Activated T-helper 1 cell treated with anti-CD3 and anti-CD28 coated beads, Interleukin-12 subunit alpha, Interleukin-12 subunit beta, Interleukin-2, Interleukin-4 antibody, amounts not matched to agents 30 ng/mL and 10 ng/mL and 1 ng/mL, durations not matched to agents 14 hours and 24 hours and 36 hours (primary cell): ENCODE measurements at regions of chr14 and their contacts with region 1.

Region 1: GRCh38 chr14:94129111-94129757 is at the start of gene IFI27L2:
- DNase-seq: peak; percentile 59
- H3K4me3 Mint-ChIP-seq: peak within 1 kb of the TSS; percentile 87
- H3K27ac Mint-ChIP-seq: peak within 1 kb of the TSS; percentile 86
- H3K4me1 Mint-ChIP-seq: peaks cover 26% of the 10 kb centered on the region
- H3K27me3 Mint-ChIP-seq: peaks cover 20% of the 10 kb centered on the region
- total RNA-seq, gene IFI27L2: 33.5 and 36.1 TPM in 2 replicates

Region 2: DNA sequence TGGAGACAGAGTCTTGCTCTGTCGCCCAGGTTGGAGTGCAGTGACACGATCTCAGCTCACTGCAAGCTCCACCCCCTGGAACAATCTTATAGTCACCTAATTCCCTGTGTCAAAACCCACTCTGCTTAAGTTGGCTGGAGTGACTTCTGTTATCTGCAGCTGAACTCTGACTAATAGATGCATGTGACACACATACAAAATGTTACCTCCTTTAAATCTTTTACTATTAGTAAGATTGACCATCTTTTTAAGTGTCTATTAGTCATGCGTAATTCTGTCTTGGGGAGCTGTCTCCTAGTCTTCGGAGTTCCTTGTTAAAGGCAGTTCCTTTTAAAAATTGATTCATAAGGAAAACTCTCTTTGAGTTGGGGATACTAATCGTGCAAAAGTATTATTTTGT is 40.7 kb before region 1 on chr14:
- intact Hi-C with region 1: no loop called
- DNase-seq: no peak
- H3K4me3 Mint-ChIP-seq: no peak overlapping the region
- H3K27ac Mint-ChIP-seq: no peak overlapping the region
- H3K4me1 Mint-ChIP-seq: no peaks in the 10 kb centered on the region
- H3K27me3 Mint-ChIP-seq: no peaks in the 10 kb centered on the region

Region 3: GRCh38 chr14:94173885-94174603 is 44.8 kb after region 1 on chr14 and contains the start of gene PPP4R4:
- intact Hi-C with region 1: loop called (anchors 1 kb)
- DNase-seq: peak; percentile 85
- H3K4me3 Mint-ChIP-seq: peak within 1 kb of the TSS; percentile 83
- H3K27ac Mint-ChIP-seq: peak within 1 kb of the TSS; percentile 81
- H3K4me1 Mint-ChIP-seq: peaks cover 22% of the 10 kb centered on the region
- H3K27me3 Mint-ChIP-seq: peaks cover 49% of the 10 kb centered on the region
- total RNA-seq, gene PPP4R4: 2.2 and 2.4 TPM in 2 replicates

Region 4: DNA sequence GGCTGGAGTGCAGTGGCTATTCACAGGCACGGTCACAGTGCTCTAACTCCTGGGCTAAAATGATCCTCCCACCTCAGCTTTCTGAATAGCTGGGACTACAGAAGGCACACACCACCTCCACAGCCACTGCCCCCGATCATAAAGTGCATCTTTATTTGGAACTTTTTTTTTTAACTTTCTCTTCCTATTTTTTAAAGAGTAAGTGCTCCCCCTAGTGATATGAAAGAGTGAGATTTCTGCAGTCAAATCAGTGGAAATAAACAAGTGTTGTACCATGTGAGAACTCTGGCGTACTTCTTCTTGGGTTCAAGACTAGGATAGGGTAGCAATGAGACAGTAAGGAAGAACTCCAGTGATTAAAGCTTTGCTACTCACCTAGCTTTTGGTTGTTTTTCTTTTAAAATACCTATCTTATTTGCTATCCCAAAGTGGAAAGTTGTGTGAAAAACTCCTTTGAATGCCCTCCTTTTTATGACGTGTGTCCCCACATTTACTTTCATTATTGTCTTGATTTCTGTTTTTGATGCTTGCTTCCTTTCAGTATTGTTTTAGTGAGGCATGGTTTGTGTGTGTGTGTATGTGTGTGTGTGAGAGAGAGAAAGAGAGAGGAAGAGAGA is 51.5 kb after region 1 on chr14:
- intact Hi-C with region 1: loop called (anchors 1 kb)
- DNase-seq: no peak
- H3K4me3 Mint-ChIP-seq: peak overlapping the region; percentile 11
- H3K27ac Mint-ChIP-seq: peak overlapping the region; percentile 51
- H3K4me1 Mint-ChIP-seq: peaks cover 11% of the 10 kb centered on the region
- H3K27me3 Mint-ChIP-seq: peaks cover 30% of the 10 kb centered on the region

Region 5: DNA sequence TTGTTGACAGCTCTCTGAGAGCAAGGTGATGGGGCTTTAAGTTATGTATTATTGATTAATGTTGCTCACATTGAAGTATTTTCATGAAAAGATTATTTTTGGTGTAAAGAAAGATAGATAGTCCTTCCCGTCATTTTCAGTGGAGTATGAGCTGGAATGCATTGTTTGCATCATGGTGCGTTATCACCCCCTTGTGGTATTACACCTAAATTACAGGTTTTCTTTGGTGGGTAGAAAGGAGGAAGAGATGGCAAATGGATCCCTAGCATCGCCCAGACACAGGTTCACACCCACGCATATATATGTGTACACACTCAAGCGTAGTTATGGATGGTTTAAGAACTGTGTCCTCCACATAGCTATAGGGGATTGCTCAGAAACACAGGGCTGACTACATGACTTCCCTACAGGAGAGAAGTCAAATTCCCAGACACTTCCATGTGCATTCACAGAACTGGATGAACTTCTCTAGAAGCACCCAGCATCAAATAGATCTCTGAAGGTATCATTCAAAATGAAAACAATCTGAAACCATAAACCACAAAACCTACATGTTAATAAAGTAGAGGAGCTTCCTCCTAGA is 178.3 kb after region 1 on chr14:
- intact Hi-C with region 1: loop called (anchors 5 kb)
- DNase-seq: no peak
- H3K4me3 Mint-ChIP-seq: no peak overlapping the region
- H3K27ac Mint-ChIP-seq: no peak overlapping the region
- H3K4me1 Mint-ChIP-seq: no peaks in the 10 kb centered on the region
- H3K27me3 Mint-ChIP-seq: no peaks in the 10 kb centered on the region

Region 6: GRCh38 chr14:94485944-94486841 is 357.0 kb after region 1 on chr14:
- intact Hi-C with region 1: loop called (anchors 1 kb)
- DNase-seq: peak; percentile 21
- H3K4me3 Mint-ChIP-seq: no peak overlapping the region
- H3K27ac Mint-ChIP-seq: no peak overlapping the region
- H3K4me1 Mint-ChIP-seq: no peaks in the 10 kb centered on the region
- H3K27me3 Mint-ChIP-seq: peaks cover 11% of the 10 kb centered on the region